Activated T-helper 2 cell treated with anti-CD3 and anti-CD28 coated beads, Interferon-gamma antibody, Interleukin-2, Interleukin-4, amounts not matched to agents 10 μg/mL and 5 μg/mL and 100 μg/mL, durations not matched to agents 14 hours and 24 hours and 36 hours (primary cell): ENCODE measurements at regions of chr16 and their contacts with region 1.

Region 1: DNA sequence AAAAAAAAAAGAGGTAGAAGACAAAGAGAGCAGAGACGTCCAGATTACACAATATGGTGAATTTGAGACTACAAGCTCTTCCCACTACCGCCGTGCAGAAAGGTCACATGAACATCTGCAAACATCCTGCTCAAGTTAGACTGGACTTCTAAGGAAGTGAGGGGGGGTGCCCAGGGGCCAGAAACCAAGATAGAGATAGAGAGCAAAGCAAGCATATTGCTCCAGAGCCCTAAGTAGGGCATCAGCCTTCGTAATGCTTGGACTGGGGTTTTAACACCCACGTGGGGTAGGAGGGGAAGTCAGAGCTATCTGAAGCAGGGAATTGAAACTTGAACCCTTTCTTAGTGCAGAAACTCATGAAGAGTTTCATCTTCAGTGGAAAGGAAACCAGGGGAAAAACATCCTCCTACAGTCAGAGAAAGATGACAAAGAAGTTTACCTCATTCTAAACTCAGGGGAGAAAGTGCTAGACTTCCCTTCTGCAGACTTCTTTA is 8.7 kb downstream of the CLEC19A start:
- DNase-seq: peak; percentile 22
- H3K4me3 Mint-ChIP-seq: peak overlapping the region; percentile 17
- H3K27ac Mint-ChIP-seq: peak overlapping the region; percentile 83
- H3K4me1 Mint-ChIP-seq: peaks cover 30% of the 10 kb centered on the region
- H3K27me3 Mint-ChIP-seq: no peaks in the 10 kb centered on the region

Region 2: DNA sequence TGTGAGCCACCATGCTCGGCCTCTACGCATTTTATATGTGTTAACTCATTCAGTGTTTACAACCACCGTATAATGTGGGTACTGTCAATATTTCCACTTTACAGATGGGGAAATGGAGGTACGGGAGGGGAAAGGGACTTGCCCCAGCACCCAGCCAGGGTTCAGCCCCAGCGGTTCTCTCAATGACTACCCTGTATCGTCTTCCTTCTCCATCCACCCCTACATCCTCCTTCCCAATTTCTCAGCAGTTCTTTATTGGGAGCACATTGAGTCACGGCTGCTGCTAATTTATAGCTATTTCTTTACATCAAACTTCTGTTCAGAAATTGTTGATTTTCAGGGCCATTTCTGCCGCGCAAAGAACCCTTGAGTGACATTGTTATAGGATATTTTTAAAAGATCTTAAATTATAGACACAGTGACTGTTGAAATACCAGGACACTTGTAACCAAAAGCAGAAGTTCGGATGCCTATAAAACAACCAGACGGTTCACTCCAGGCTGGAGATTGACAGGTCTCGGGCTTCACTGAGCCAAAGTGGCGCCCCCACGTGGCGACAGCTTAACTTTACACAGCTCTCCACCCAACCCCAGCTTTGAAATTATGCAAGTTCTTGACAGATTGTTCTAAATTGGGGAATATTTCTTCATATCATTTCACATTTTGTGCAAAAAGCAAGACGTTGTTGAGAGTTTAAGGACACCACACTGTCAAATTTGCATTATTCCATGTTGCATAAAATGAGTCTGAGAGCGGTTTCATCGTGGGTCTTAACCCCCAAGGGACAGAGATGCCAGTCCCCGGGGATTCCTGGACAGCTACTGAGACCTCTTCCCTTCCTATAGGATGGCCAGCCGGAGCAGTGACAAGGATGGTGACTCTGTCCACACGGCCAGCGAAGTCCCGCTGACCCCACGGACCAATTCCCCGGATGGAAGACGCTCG is 114.4 kb before region 1 on chr16:
- intact Hi-C with region 1: loop called (anchors 10 kb)
- DNase-seq: peak; percentile 32
- H3K4me3 Mint-ChIP-seq: no peak overlapping the region
- H3K27ac Mint-ChIP-seq: no peak overlapping the region
- H3K4me1 Mint-ChIP-seq: peaks cover 4% of the 10 kb centered on the region
- H3K27me3 Mint-ChIP-seq: peaks cover 6% of the 10 kb centered on the region

Region 3: DNA sequence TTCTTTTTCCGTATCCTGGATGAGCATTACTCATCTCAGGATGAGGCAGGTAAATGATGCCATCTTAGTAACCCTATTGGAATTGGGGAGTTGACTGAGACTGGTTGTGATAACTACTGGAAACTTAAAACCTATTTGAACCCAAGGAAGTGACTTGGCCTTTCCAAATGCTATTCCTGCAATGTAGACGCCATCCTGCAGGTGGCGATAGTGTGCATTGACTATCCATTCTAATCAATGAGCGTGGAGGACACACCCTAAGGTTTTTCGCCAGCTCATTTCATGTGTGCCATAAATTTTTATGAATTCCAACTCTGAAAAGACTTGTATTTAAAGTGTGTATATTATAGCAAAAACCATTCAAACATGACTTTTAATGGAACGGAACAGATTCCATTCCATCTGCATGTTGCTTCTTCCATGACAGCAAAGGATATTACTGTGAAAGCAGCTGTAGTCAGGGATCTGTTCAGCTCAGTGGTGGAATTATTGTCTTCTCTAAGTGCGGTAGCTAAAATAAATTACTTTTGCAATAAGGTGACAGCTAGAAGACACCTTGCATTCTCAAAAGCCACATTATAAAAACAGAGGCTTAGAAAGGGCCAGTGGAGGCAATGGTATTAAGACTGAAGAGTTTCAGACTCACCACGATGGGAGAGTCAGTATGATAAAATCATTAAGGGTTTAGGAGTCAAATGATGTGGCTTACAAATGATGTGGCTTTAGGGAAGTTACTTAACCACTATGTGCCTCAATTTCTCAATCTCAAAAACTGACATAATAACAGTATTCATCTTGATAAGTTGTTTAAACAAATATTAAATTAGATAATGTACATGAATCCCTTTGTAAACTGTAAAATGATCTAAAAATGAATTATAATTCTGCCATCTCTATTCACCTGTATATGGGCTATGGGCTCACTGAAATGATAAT is 70.7 kb before region 1 on chr16:
- intact Hi-C with region 1: no loop called
- DNase-seq: peak; percentile 15
- H3K4me3 Mint-ChIP-seq: no peak overlapping the region
- H3K27ac Mint-ChIP-seq: no peak overlapping the region
- H3K4me1 Mint-ChIP-seq: no peaks in the 10 kb centered on the region
- H3K27me3 Mint-ChIP-seq: peaks cover 3% of the 10 kb centered on the region

Region 4: DNA sequence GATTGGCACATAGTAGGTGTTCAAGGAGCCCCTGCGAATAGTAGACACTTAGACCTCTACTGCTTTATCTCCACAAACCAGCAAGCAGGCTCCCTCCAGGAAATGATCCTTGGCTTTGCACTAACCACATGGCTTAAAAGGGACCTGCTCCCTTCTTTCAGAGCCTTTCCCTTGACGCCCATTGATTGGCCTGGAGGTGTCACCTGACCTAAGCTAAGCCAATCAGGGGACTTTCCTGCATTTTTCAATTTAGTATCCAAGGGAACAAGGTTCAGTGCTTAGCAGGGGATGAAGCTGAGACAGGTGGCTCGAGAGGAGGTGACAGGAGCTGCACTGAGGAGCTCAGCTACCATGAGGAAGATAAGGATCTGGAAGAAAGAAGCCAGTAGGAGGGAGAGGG is 44.1 kb after region 1 on chr16:
- intact Hi-C with region 1: no loop called
- DNase-seq: no peak
- H3K4me3 Mint-ChIP-seq: no peak overlapping the region
- H3K27ac Mint-ChIP-seq: no peak overlapping the region
- H3K4me1 Mint-ChIP-seq: no peaks in the 10 kb centered on the region
- H3K27me3 Mint-ChIP-seq: no peaks in the 10 kb centered on the region

Region 5: DNA sequence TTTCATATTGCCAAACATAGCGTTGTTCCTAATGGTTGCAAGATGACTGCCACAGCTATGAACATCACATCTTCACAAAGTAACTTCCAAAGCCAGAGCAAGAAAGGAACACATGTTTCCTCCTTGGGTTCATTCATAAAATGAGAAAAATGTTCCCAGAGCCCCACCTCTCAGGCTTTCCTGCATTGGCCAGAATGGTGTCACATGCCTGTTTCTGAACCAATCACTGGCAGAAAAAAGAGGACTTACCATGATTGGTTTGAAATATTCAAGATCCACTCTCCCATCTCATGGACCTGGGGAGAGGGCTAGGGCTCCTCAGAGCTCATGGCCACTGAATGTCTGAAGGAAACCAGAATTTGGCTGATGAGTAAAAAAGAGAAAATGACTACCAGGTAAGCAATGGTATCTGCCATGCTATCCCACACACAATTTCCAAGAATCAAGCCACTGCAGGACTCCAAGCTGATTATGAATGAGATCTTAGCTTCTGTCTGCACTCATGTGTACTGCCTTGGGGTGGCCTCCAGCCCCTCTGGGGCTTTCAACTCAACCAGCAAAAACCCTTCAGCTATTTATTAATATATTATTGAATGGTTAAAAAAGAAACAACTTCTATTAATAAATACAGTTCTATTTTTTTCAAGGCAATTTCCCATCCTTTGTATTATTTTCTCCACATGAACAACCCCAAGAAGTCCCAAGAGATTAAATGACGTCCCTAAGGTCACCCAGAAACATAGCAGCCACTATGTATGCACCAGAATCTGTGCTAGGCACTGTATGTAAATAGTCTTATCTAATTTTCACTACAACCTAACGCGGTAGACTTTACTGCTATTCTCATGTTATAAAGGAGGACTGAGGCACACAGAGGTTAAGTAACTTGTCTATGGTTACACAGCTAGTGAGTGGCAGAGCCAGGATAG is 62.1 kb after region 1 on chr16:
- intact Hi-C with region 1: loop called (anchors 1 kb)
- DNase-seq: no peak
- H3K4me3 Mint-ChIP-seq: no peak overlapping the region
- H3K27ac Mint-ChIP-seq: no peak overlapping the region
- H3K4me1 Mint-ChIP-seq: peaks cover 8% of the 10 kb centered on the region
- H3K27me3 Mint-ChIP-seq: peaks cover 2% of the 10 kb centered on the region

Region 6: DNA sequence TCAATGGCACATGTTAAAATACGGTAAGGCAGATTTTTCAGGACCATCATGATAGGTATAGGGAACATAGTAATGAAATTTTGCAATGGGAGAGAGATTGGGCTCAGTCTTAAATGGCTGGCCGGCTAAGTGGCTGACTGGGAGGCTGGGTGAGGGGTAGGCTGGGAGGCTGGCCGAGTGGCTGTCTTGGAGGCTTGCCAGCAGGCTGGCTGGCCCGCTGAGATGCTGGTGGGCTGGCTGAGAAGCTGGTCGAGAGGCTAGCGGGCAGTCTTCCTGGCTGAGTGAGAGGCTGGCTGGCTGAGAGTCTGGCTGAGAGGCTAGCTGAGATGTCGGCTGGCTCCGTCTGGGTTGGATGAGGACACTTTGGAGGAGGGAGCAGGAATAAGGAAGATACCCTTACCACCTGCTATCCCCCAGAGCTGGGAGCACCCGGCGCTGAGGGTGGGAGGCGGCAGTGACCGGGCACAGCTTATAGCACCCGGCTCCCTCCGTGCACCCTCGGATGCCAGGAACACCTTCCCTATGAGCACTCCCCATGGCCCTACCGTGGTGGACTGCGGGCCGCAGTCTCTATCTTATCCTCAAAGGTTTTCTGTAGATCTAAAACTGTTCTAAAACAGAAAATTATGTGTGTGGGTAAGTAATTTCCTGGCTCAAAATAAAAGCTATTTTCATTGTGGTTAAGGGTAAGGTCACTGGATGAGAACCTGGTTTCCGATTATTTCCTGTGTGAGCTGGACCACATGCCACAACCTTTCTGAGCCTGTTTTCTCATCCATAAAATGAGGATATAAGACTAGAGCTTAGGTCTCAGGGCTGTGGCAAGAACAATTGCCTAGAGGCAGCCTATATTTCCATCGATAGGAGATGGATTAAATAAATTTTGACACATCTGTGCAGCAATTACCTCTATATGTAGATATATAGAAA is 88.9 kb after region 1 on chr16:
- intact Hi-C with region 1: loop called (anchors 1 kb)
- DNase-seq: peak; percentile 16
- H3K4me3 Mint-ChIP-seq: peak overlapping the region; percentile 32
- H3K27ac Mint-ChIP-seq: no peak overlapping the region
- H3K4me1 Mint-ChIP-seq: peaks cover 53% of the 10 kb centered on the region
- H3K27me3 Mint-ChIP-seq: peaks cover 26% of the 10 kb centered on the region

Region 7: DNA sequence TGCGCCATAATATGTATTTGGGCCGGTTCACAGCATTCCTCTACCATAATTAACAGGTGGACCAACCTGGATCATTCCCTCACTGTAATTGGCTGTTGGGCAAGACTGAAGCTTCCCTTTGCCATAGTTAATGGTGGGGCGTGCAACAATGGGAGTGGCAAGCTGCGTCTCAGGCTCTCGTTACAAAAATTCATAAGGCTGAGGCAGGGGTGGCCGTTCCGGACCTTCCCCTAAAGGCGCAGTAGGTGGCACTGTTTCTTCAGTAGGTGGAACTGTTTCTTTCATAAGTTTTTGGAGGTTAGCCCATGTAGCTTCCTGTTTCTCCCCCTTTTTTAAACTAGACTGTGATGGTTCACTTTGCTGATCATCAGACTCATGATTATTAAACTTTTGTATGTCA is 106.5 kb after region 1 on chr16:
- intact Hi-C with region 1: no loop called
- DNase-seq: no peak
- H3K4me3 Mint-ChIP-seq: no peak overlapping the region
- H3K27ac Mint-ChIP-seq: no peak overlapping the region
- H3K4me1 Mint-ChIP-seq: no peaks in the 10 kb centered on the region
- H3K27me3 Mint-ChIP-seq: peaks cover 28% of the 10 kb centered on the region